PC-3 (cell line): ENCODE measurements at regions of chr2 and their contacts with region 1.

Region 1: DNA sequence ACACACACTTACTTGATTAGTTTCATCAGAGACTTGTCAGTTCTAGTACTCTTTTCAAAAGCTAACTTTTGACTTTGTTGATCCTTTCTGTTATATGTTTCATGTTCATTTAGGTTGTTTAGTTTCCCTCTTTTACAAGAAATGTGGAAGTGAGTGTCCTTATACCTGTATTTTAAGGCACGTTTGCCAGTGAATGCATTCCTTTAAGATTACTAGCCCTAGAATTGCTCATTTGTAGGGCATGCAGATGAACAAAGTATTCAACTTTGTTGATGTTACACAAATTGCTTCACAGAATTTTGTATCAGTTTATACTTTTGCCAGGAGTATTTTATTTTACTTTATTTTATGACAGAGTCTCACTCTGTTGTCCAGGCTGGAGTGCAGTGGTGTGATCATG is 6.3 kb downstream of the IL1RL2 start:
- DNase-seq: peak; percentile 77
- ATAC-seq: peak; percentile 82
- H3K4me3 ChIP-seq: no peak overlapping the region
- H3K27ac ChIP-seq: no peak overlapping the region
- H3K4me1 ChIP-seq: peaks cover 14% of the 10 kb centered on the region
- H3K27me3 ChIP-seq: no peaks in the 10 kb centered on the region
- CTCF ChIP-seq: no peak

Region 2: GRCh38 chr2:102632380-102633175 is 439.5 kb after region 1 on chr2:
- CTCF ChIA-PET with region 1: no interaction called
- POLR2A ChIA-PET with region 1: interaction called, 15 read pairs
- intact Hi-C with region 1: no loop called
- DNase-seq: peak; percentile 66
- ATAC-seq: peak; percentile 59
- H3K4me3 ChIP-seq: no peak overlapping the region
- H3K27ac ChIP-seq: peak overlapping the region; percentile 84
- H3K4me1 ChIP-seq: peaks cover 32% of the 10 kb centered on the region
- H3K27me3 ChIP-seq: no peaks in the 10 kb centered on the region
- CTCF ChIP-seq: no peak